ENCODE measurements at regions of chr4 and their contacts with region 1.

Region 1: GRCh38 chr4:26028793-26029567 is 115.0 kb downstream of the SMIM20 start:
- DNase-seq: peak; percentile 74 to 91
- H3K4me3 ChIP-seq: peak overlapping the region; percentile 44 to 63 (median 52)
- H3K27ac ChIP-seq: peak overlapping the region; percentile 95
- H3K4me1 ChIP-seq: peaks cover 9 to 32% (median 20%) of the 10 kb centered on the region in 4 experiments
- H3K27me3 ChIP-seq: no peaks in the 10 kb centered on the region
- CTCF ChIP-seq: peak; percentile 74 to 88 (median 85)
- EP300 ChIP-seq: peak in 1 of 2 experiments; percentile 18; a peak in 1 of 3 replicates
- POLR2A ChIP-seq: peak; percentile 39 to 98
- RAD21 ChIP-seq: peak; percentile 90 to 92

Region 2: DNA sequence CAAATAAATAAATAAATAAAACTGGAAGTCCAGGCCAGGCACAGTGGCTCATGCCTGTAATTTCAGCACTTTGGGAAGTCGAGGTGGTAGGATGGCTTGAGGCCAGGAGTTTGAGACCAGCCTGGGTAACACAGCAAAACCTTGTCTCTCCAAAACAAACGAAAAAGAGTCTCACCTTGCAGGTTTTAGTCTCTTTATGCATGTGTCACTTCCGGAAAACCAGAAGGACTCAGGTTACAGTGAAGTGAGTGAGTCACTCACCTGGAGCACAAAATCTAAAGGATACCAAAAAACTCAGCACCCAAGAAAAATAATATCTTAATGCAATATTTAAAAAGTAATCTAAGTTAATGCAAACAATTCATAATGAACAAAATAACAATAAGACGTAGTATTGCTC is 393.5 kb before region 1 on chr4:
- CTCF ChIA-PET with region 1: no interaction called
- POLR2A ChIA-PET with region 1: no interaction called
- DNase-seq: no peak
- H3K4me3 ChIP-seq: no peak overlapping the region
- H3K27ac ChIP-seq: no peak overlapping the region
- H3K4me1 ChIP-seq: no peaks in the 10 kb centered on the region
- H3K27me3 ChIP-seq: no peaks in the 10 kb centered on the region; a peak in 1 of 7 replicates
- CTCF ChIP-seq: no peak
- EP300 ChIP-seq: no peak
- POLR2A ChIP-seq: no peak
- RAD21 ChIP-seq: no peak

Region 3: DNA sequence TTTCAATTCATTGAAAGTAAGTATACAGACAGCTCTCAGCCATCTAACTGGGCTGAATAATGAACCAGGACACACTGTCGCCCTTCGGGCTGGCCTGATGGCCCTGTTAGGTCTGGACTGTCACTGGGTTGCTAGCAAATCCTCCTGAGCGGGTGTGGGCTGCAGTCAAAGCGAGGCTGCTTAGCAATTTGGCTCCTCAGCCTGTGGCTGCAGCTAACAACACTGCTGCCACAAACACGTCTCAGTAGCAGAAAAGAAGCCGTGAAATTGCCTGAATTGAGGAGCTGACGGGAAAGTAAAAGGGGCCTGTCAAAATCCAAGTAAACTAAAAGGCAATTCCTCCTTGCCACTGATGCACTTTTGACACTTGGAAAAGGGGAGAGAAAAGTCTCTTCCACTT is 42.2 kb before region 1 on chr4:
- CTCF ChIA-PET with region 1: interaction called, 25 read pairs
- POLR2A ChIA-PET with region 1: interaction called, 23 read pairs
- DNase-seq: peak in 1 of 2 experiments; percentile 23
- H3K4me3 ChIP-seq: no peak overlapping the region
- H3K27ac ChIP-seq: no peak overlapping the region
- H3K4me1 ChIP-seq: no peaks in the 10 kb centered on the region
- H3K27me3 ChIP-seq: no peaks in the 10 kb centered on the region
- CTCF ChIP-seq: no peak
- EP300 ChIP-seq: no peak
- POLR2A ChIP-seq: no peak
- RAD21 ChIP-seq: no peak

Region 4: GRCh38 chr4:26050212-26050643 is 21.2 kb after region 1 on chr4:
- CTCF ChIA-PET with region 1: interaction called, 7 read pairs
- POLR2A ChIA-PET with region 1: interaction called, 14 read pairs
- DNase-seq: no peak
- H3K4me3 ChIP-seq: no peak overlapping the region
- H3K27ac ChIP-seq: no peak overlapping the region
- H3K4me1 ChIP-seq: peaks cover 0 to 5% (median 0%) of the 10 kb centered on the region in 4 experiments; a peak in 1 of 7 replicates
- H3K27me3 ChIP-seq: no peaks in the 10 kb centered on the region
- CTCF ChIP-seq: no peak
- EP300 ChIP-seq: no peak
- POLR2A ChIP-seq: no peak
- RAD21 ChIP-seq: no peak

Region 5: GRCh38 chr4:26319467-26319948 is 290.5 kb after region 1 on chr4:
- CTCF ChIA-PET with region 1: interaction called, 7 read pairs
- POLR2A ChIA-PET with region 1: interaction called, 20 read pairs
- DNase-seq: peak; percentile 95 to 97
- H3K4me3 ChIP-seq: peak overlapping the region; percentile 87 to 98 (median 92)
- H3K27ac ChIP-seq: peak overlapping the region; percentile 87
- H3K4me1 ChIP-seq: peaks cover 0 to 4% (median 1%) of the 10 kb centered on the region in 4 experiments; a peak in 4 of 7 replicates
- H3K27me3 ChIP-seq: no peaks in the 10 kb centered on the region
- CTCF ChIP-seq: no peak
- EP300 ChIP-seq: 0 out of 3 replicates have a peak, but pooled peaks of 1 of the 2 experiments have one; percentile 5
- POLR2A ChIP-seq: no peak; a peak in 1 of 3 replicates
- RAD21 ChIP-seq: peak; percentile 3 to 30; a peak in 2 of 4 replicates

Measured in H1 (cell line).